ENCODE measurements at regions of chr2 and their contacts with region 1.

Region 1: DNA sequence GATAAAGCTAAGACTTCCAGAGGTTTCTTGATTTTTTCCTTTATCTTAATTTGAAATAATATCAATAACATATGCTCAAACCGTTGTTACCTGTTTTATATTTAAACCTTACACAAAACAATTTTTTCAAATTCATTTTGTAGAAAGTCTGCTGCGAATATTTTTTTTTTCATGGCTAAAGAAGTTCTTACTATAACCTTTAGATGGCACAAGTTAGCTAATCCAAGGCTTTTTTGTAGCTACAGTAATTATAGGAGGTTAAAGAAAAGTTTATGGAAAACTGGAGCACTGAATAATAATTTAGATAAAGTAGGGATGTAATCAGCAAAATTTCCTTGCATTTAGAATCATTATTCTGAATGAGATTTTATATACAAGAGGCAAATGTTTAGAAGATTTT is 78.0 kb upstream of the PNPT1 start:
- DNase-seq: no peak
- ATAC-seq: no peak
- H3K4me3 ChIP-seq: no peak overlapping the region
- H3K27ac ChIP-seq: no peak overlapping the region
- H3K4me1 ChIP-seq: no peaks in the 10 kb centered on the region
- H3K27me3 ChIP-seq: no peaks in the 10 kb centered on the region
- CTCF ChIP-seq: peak; percentile 36 to 69 (median 57)
- POLR2A ChIP-seq: no peak

Region 2: GRCh38 chr2:55961318-55961911 is 189.8 kb after region 1 on chr2:
- intact Hi-C with region 1: loop called in 9 of 10 experiments (anchors 1 to 5 kb)
- DNase-seq: no peak
- ATAC-seq: peak in 2 of 4 donors; percentile 46 to 53
- H3K4me3 ChIP-seq: no peak overlapping the region
- H3K27ac ChIP-seq: no peak overlapping the region
- H3K4me1 ChIP-seq: peaks cover 0 to 10% (median 0%) of the 10 kb centered on the region in 12 donors
- H3K27me3 ChIP-seq: no peaks in the 10 kb centered on the region
- CTCF ChIP-seq: peak; percentile 40 to 67 (median 50)
- POLR2A ChIP-seq: no peak

Region 3: GRCh38 chr2:55966401-55967118 is 194.9 kb after region 1 on chr2:
- intact Hi-C with region 1: loop called in 9 of 10 experiments (anchors 1 to 5 kb)
- DNase-seq: peak; percentile 12 to 66 (median 34)
- ATAC-seq: peak; percentile 50 to 85 (median 70)
- H3K4me3 ChIP-seq: no peak overlapping the region
- H3K27ac ChIP-seq: peak overlapping the region in 7 of 12 donors; percentile 0 to 77 (median 44)
- H3K4me1 ChIP-seq: peaks cover 0 to 7% (median 0%) of the 10 kb centered on the region in 12 donors
- H3K27me3 ChIP-seq: no peaks in the 10 kb centered on the region
- CTCF ChIP-seq: no peak
- POLR2A ChIP-seq: no peak

Region 4: DNA sequence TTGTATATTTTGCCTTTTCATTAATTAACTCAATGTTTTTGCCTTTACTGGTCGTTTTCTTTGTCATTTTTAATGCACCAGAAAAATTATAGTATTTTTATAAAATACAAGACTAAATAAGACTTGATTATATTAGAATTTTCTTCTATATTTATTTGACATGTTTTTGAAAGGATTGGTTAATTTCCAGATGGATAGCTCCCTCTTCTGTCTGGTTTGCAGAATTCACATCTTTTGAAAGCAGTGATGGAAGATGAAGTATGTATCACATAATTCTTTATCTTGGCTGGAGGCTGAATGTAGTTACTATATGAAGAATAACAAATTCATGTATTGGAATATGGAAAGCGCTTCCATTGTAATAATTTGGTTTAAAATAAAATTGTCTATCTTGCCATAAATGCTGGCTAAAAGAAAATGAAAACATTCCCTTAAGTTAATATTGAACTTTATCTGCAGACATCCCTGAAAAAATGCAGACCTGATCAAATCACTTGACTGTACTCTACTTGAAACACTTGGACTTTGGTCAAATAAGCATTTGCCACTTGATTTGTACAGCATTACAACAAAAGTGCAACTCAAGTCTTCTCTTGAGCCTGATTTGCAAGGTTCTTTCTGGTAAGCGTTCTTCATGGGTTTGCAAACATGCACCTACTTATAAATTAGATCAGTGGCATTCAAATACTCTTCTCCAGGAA is 238.3 kb after region 1 on chr2:
- intact Hi-C with region 1: loop called in 5 of 10 experiments (anchors 1 to 5 kb)
- DNase-seq: no peak
- ATAC-seq: peak in 2 of 4 donors; percentile 41 to 58
- H3K4me3 ChIP-seq: no peak overlapping the region
- H3K27ac ChIP-seq: peak overlapping the region in 2 of 12 donors; percentile 1 to 46
- H3K4me1 ChIP-seq: peaks cover 0 to 22% (median 3%) of the 10 kb centered on the region in 12 donors
- H3K27me3 ChIP-seq: peaks cover 0 to 6% (median 0%) of the 10 kb centered on the region in 9 donors
- CTCF ChIP-seq: peak; percentile 25 to 69 (median 57)
- POLR2A ChIP-seq: no peak

Region 5: DNA sequence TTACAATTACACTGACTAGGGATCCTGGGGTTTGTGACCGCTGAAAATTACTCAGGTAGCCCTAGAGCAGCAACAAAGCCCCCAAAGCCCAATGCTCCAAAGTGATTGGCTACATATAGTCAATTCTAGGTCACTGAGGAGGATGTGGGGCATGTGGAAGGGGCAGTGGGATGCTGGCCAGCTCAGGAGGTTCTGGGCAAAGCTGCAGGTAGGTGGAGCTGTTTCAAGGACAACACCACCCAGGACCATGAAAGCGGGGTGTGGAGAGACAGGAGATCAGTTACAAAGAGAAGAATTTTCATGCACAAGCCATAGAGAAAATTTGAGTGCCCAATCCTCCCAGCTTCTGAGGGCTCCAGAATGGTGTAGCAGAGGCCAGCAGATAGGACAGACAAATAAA is 337.2 kb after region 1 on chr2:
- intact Hi-C with region 1: no loop called
- DNase-seq: no peak
- ATAC-seq: no peak
- H3K4me3 ChIP-seq: no peak overlapping the region
- H3K27ac ChIP-seq: no peak overlapping the region
- H3K4me1 ChIP-seq: no peaks in the 10 kb centered on the region
- H3K27me3 ChIP-seq: no peaks in the 10 kb centered on the region
- CTCF ChIP-seq: no peak
- POLR2A ChIP-seq: no peak

Measured in heart left ventricle (tissue), 16 donors.